Activated CD8-positive, alpha-beta T cell treated with anti-CD3 and anti-CD28 coated beads, Interleukin-2, amount 10 ng/mL, durations not matched to agents 7 days and 5 days (primary cell): ENCODE measurements at regions of chr16 and their contacts with region 1.

Region 1: DNA sequence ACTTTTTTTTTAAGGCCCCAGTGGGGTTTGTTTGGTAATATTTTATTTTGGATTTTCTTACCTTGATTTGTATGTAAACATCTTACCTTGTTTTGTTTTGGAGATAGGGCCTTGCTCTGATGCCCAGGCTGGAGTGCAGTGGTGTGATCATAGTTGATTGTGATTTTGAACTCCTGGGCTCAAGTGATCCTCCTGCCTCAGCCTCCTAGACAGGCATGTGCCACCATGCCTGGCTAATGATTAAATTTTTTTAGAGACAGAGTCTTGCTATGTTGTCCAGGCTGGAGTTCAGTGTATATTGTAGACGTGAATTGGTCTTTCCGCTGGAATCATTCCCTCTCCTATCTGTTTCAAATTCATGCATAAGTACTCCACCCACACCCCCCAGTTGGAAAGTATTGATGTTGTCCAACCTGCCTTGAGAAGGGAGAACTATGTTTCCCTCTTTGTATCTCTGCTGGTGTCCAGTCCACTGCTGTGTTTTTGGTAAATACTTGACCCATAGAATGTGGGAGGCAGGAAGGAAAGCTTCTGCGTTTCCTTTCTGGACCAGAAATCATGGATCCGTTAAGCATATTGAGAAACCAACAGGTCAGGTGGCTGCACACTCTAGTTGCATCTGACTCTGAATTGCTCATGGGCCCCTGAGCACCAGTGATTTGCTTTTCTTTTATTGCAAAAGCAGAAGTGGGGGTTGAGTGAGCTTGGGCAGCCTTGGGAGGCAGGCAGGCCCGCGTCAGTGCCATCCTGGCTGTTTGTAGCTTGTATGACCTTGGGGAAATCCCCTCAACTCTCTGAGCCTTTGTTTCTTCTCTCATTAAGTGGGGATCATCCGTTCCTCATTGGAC is 25.0 kb downstream of the RMI2 start:
- DNase-seq: no peak
- ATAC-seq: no peak
- H3K4me3 Mint-ChIP-seq: no peak overlapping the region
- H3K27ac Mint-ChIP-seq: no peak overlapping the region
- H3K4me1 Mint-ChIP-seq: peaks cover 24% of the 10 kb centered on the region
- H3K27me3 Mint-ChIP-seq: no peaks in the 10 kb centered on the region

Region 2: DNA sequence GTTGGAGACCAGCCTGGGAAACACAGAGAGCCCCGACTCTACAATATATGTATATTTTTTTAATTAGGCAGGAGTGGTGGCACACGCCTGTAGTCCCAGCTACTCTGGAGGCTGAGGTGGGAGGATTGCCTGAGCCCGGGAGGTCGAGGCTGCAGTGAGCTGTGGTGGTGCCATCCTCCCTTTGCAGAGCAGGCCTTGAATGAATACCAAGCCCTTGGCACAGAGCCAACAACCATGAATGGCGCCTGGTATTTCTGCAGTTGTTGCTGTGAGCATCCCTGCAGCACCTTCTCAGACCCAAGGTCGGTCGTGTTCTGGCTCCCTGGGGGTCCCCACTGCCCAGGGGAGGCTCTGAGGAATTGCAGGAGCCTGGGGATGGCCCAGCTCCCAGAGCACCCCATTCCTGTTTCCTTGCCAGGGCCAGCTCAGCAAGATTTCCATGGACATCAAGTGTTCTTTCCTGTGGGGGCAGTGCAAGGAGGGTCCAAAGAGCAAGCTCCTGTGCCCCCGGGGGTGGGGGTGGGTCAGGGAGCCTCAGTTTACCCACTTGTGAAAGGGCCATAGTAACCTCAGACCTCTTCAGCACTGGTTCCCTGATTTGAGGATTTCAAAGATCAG is 50.7 kb before region 1 on chr16:
- CTCF ChIA-PET with region 1: no interaction called
- POLR2A ChIA-PET with region 1: no interaction called
- DNase-seq: no peak
- ATAC-seq: no peak
- H3K4me3 Mint-ChIP-seq: no peak overlapping the region
- H3K27ac Mint-ChIP-seq: peak overlapping the region; percentile 25
- H3K4me1 Mint-ChIP-seq: peaks cover 46% of the 10 kb centered on the region
- H3K27me3 Mint-ChIP-seq: no peaks in the 10 kb centered on the region

Region 3: GRCh38 chr16:11356573-11357331 is 13.6 kb before region 1 on chr16:
- CTCF ChIA-PET with region 1: interaction called, 19 read pairs
- POLR2A ChIA-PET with region 1: no interaction called
- DNase-seq: peak; percentile 68
- ATAC-seq: no peak
- H3K4me3 Mint-ChIP-seq: peak overlapping the region; percentile 76
- H3K27ac Mint-ChIP-seq: peak overlapping the region; percentile 65
- H3K4me1 Mint-ChIP-seq: peaks cover 91% of the 10 kb centered on the region
- H3K27me3 Mint-ChIP-seq: peaks cover 5% of the 10 kb centered on the region

Region 4: DNA sequence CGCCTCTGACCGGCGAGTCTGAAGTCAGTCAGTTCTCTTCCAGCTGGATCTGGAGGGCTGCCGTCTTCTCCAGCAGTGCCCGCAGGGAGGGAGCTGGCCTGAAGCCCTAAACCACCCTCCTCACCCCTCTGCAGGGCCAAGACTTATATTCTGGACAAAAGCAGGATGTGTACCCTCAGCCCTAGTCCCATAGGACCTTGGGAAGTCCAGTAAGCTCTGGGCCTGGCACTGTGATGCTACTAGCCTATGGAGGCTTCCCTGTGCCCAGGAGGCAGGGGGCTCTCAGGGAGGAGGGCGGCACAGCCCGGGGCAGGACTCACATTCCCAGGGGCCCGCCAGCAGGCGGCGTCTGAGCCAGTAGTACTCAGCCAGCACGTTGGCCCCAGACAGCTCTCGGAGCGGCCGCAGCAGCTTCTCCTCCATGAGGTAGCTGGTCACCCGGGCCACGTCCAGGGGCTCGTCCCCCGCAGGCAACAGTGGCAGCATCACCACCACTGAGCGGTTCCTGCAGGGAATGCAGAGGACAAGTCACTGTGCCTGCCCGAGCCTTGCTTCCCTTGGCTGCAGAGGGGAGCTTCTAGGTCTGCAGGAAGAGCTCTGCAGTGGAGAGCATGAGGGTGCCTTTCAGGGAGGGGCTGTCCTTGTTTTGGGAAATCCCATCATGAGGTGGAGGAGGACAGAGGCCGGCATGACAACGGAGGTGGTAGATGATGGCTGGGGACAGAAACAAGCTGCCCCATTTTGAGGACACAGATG is 16.7 kb after region 1 on chr16:
- CTCF ChIA-PET with region 1: interaction called, 18 read pairs
- POLR2A ChIA-PET with region 1: no interaction called
- DNase-seq: no peak
- ATAC-seq: no peak
- H3K4me3 Mint-ChIP-seq: no peak overlapping the region
- H3K27ac Mint-ChIP-seq: no peak overlapping the region
- H3K4me1 Mint-ChIP-seq: peaks cover 21% of the 10 kb centered on the region
- H3K27me3 Mint-ChIP-seq: no peaks in the 10 kb centered on the region

Region 5: DNA sequence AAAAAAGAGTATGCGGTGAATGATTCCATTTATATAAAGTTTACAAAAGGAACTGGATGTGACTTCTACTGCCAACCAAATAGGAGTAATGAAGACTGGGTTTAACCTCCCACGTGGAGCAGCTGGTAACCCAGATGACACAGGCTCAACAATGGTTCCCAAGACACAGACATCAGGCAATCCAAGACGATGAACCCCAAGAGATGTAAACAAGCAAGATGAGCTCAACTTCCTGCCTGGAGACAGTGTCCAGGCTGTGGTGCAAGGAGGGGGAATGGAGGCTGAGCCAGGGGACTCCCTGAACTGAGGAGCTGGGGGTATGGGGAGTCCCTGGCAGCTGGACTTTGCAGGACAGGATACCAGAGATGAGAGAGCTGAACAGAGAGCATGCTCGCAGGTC is 111.7 kb after region 1 on chr16:
- CTCF ChIA-PET with region 1: no interaction called
- POLR2A ChIA-PET with region 1: no interaction called
- DNase-seq: no peak
- ATAC-seq: no peak
- H3K4me3 Mint-ChIP-seq: no peak overlapping the region
- H3K27ac Mint-ChIP-seq: no peak overlapping the region
- H3K4me1 Mint-ChIP-seq: no peaks in the 10 kb centered on the region
- H3K27me3 Mint-ChIP-seq: no peaks in the 10 kb centered on the region